Tibial artery (tissue), 4 donors: ENCODE measurements at regions of chr1 and their contacts with region 1.

Region 1: DNA sequence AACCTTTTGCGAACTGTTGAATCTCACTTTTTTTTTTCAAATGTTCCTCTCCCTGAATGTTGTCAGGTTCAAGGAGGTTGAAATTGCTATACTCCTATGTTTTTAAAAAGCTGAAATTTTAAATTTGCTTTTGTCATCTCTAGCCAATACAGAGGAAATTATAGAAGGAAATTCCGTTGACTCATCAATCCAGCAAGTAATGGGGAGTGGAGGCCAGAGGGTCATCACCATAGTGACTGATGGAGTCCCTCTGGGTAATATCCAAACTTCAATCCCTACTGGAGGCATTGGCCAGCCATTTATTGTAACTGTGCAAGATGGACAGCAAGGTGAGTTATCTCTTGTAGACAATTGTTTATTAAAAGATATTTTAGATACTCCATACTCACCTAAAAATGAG is 36.3 kb downstream of the GABPB2 start:
- DNase-seq: no peak
- H3K4me3 ChIP-seq: no peak overlapping the region
- H3K27ac ChIP-seq: no peak overlapping the region
- H3K4me1 ChIP-seq: no peaks in the 10 kb centered on the region
- H3K27me3 ChIP-seq: no peaks in the 10 kb centered on the region
- CTCF ChIP-seq: no peak

Region 2: GRCh38 chr1:151156515-151156819 is 49.6 kb after region 1 on chr1 and contains the start of gene TNFAIP8L2:
- intact Hi-C with region 1: loop called (anchors 5 kb)
- DNase-seq: peak in 1 of 2 donors; percentile 57
- H3K4me3 ChIP-seq: peak within 1 kb of the TSS; percentile 5 to 6
- H3K27ac ChIP-seq: peak within 1 kb of the TSS in 1 of 2 donors; percentile 4
- H3K4me1 ChIP-seq: peaks cover 0 to 9% (median 0%) of the 10 kb centered on the region in 4 donors
- H3K27me3 ChIP-seq: no peaks in the 10 kb centered on the region
- CTCF ChIP-seq: no peak

Region 3: GRCh38 chr1:151243683-151244216 is 136.9 kb after region 1 on chr1:
- intact Hi-C with region 1: loop called (anchors 10 kb)
- DNase-seq: no peak
- H3K4me3 ChIP-seq: no peak overlapping the region
- H3K27ac ChIP-seq: no peak overlapping the region
- H3K4me1 ChIP-seq: no peaks in the 10 kb centered on the region
- H3K27me3 ChIP-seq: no peaks in the 10 kb centered on the region
- CTCF ChIP-seq: no peak